MCF 10A (cell line): ENCODE measurements at regions of chr6 and their contacts with region 1.

Region 1: GRCh38 chr6:4155848-4156466 is 20.6 kb upstream of the ECI2 start:
- DNase-seq: peak; percentile 91
- H3K4me3 Mint-ChIP-seq: no peak overlapping the region
- H3K27ac Mint-ChIP-seq: no peak overlapping the region
- H3K4me1 Mint-ChIP-seq: no peaks in the 10 kb centered on the region
- H3K27me3 Mint-ChIP-seq: no peaks in the 10 kb centered on the region
- CTCF ChIP-seq: peak; percentile 71

Region 2: DNA sequence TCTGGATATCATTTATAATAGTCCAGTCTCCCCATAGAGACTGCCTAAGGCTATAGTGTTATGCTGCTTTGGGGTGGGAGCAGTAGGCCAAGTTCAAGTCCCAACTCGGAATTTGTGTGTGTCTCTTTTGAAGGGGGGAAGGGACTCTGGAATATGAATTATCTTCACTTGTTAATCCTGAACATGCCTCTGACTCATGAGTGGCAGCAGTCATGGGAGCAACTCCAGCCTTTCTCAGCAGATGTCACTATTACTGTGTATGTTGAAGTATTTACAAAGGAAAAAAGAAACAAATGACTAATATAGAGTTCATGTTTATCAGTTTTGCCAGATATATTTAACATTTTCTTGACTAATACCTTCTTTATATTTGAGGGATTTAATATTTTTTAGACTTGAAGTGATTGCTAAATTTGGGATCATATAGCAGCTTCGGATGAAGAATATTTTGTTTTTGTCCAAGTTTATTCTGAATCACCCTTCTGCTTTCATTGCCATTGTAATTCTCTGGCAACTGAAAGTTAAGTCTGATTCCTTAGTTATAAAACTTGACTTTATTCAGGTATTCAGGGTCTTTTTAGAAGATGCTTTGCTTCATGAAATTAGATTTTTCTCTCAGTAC is 100.4 kb before region 1 on chr6:
- CTCF ChIA-PET with region 1: interaction called, 92 read pairs
- POLR2A ChIA-PET with region 1: interaction called, 11 read pairs
- intact Hi-C with region 1: loop called (anchors 1 kb)
- DNase-seq: peak; percentile 80
- H3K4me3 Mint-ChIP-seq: no peak overlapping the region
- H3K27ac Mint-ChIP-seq: peak overlapping the region; percentile 44
- H3K4me1 Mint-ChIP-seq: peaks cover 26% of the 10 kb centered on the region
- H3K27me3 Mint-ChIP-seq: no peaks in the 10 kb centered on the region
- CTCF ChIP-seq: peak; percentile 68

Region 3: DNA sequence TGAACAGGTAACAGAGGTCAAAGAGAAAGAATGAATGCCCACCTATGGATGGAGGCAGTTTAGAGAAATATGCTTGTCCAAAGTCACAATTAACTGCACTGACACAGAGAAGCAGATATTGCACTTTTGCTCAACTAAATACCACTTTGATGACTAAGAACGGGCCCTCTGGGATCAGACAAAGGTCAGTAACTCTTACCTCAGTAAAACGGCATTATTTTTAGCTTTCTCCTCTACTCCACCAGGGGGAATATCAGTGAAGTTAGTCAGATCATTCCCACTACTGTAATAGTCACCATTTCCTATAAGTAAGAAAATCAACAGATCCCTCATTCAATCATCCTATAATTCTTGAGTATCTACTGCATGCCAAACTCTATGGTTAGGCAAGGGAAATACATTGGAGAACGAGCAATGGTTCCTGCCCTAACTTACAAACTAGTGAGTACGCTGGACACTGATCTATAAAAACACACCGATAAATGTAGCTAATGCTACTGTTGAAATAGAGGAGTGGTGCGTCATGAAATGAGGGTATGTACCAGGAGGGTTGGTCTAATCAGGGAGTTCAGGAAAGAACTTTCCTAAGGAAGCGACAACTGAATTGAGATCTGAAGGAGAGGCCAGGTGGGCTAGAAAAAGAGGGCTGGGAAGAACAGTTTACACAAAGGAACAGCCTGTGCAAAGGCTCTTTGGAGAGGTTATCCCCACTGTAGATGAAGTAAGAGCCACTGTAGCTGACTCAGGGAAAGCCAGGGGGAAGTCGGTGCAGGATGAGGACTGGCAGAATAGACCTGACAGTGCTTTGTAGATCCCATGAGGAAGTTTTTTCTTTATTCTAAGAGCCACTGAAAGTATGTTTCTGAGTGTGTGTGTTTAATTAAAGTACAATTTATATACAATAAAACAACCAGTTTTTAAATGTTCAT is 29.8 kb before region 1 on chr6:
- CTCF ChIA-PET with region 1: interaction called, 11 read pairs
- POLR2A ChIA-PET with region 1: no interaction called
- intact Hi-C with region 1: loop called (anchors 1 kb)
- DNase-seq: peak; percentile 80
- H3K4me3 Mint-ChIP-seq: no peak overlapping the region
- H3K27ac Mint-ChIP-seq: no peak overlapping the region
- H3K4me1 Mint-ChIP-seq: peaks cover 11% of the 10 kb centered on the region
- H3K27me3 Mint-ChIP-seq: no peaks in the 10 kb centered on the region
- CTCF ChIP-seq: peak; percentile 28

Region 4: GRCh38 chr6:4135665-4136353 is 20.1 kb before region 1 on chr6:
- CTCF ChIA-PET with region 1: interaction called, 15 read pairs
- POLR2A ChIA-PET with region 1: interaction called, 16 read pairs
- intact Hi-C with region 1: no loop called
- DNase-seq: peak; percentile 88
- H3K4me3 Mint-ChIP-seq: peak overlapping the region; percentile 90
- H3K27ac Mint-ChIP-seq: peak overlapping the region; percentile 35
- H3K4me1 Mint-ChIP-seq: peaks cover 19% of the 10 kb centered on the region
- H3K27me3 Mint-ChIP-seq: no peaks in the 10 kb centered on the region
- CTCF ChIP-seq: no peak

Region 5: DNA sequence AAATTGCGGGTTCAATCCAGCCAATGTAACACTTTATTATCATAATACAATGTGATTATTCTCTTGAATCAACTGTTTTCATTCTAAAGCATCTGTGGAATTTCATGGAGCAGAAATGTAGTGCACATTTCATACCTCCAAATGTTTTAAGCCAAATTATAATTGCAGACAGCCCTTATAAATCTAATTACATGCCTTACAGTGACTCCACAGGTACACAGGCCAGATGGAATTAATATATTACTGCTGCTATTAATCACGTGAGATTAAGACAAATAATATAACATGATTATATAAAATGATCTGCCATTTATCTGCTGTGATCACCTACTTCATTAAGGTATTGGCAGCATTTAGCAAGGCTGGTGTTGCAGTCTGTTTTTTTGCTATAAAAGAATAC is 10.9 kb before region 1 on chr6:
- CTCF ChIA-PET with region 1: interaction called, 10 read pairs
- POLR2A ChIA-PET with region 1: interaction called, 3 read pairs
- intact Hi-C with region 1: no loop called
- DNase-seq: no peak
- H3K4me3 Mint-ChIP-seq: no peak overlapping the region
- H3K27ac Mint-ChIP-seq: no peak overlapping the region
- H3K4me1 Mint-ChIP-seq: no peaks in the 10 kb centered on the region
- H3K27me3 Mint-ChIP-seq: no peaks in the 10 kb centered on the region
- CTCF ChIP-seq: no peak

Region 6: GRCh38 chr6:4210629-4211423 is 54.9 kb after region 1 on chr6:
- CTCF ChIA-PET with region 1: interaction called, 12 read pairs
- POLR2A ChIA-PET with region 1: no interaction called
- intact Hi-C with region 1: loop called (anchors 5 kb)
- DNase-seq: peak; percentile 70
- H3K4me3 Mint-ChIP-seq: no peak overlapping the region
- H3K27ac Mint-ChIP-seq: no peak overlapping the region
- H3K4me1 Mint-ChIP-seq: no peaks in the 10 kb centered on the region
- H3K27me3 Mint-ChIP-seq: peaks cover 11% of the 10 kb centered on the region
- CTCF ChIP-seq: peak; percentile 63